ENCODE measurements at regions of chr15 and their contacts with region 1.

Region 1: DNA sequence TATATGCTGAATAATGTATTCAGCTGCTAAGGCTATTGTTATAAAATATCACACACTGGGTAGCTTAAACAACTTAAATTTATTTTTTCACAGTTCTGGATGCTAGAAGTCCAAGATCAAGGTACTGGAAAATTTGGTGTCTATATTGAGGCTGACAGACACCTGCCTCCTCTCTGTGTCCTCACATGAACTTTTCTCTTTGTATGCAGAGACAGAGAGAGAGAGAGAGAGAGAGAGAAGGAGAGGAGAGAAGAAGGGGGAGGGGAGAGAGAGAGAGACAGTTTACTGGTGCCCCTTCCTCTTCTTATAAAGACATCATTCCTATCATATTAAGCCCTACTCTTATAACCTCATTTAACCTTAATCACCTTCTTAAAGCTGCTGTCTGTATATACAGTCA is 320.1 kb upstream of the THBS1 start:
- DNase-seq: no peak
- H3K4me3 ChIP-seq: no peak overlapping the region
- H3K27me3 ChIP-seq: no peaks in the 10 kb centered on the region
- CTCF ChIP-seq: no peak

Region 2: GRCh38 chr15:39195988-39196486 is 64.8 kb before region 1 on chr15:
- CTCF ChIA-PET with region 1: interaction called, 3 read pairs
- POLR2A ChIA-PET with region 1: interaction called, 18 read pairs
- DNase-seq: peak; percentile 90
- H3K4me3 ChIP-seq: no peak overlapping the region
- H3K27me3 ChIP-seq: no peaks in the 10 kb centered on the region
- CTCF ChIP-seq: no peak

Region 3: DNA sequence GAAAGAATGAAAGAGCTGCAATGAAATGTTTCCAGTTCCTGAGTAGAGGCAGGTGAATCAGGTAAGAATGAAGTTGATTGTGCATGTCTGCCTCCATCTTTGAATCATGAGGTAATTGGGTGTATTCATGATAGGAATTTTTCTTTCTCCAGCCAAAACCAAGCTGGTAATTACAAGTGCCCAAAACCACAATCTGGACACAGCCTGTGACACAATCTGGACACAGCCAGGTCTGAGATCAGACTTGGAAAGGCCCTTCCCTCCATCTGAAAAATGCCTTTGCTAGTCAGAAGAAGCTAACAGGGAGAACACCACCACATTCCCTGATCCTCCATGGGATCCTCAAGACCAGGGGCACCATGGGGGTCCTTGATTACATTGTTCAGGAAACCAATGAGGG is 18.4 kb before region 1 on chr15:
- CTCF ChIA-PET with region 1: interaction called, 6 read pairs
- POLR2A ChIA-PET with region 1: interaction called, 10 read pairs
- DNase-seq: peak; percentile 77
- H3K4me3 ChIP-seq: no peak overlapping the region
- H3K27me3 ChIP-seq: no peaks in the 10 kb centered on the region
- CTCF ChIP-seq: no peak

Measured in BJ (cell line).